Mammary epithelial cell (primary cell): ENCODE measurements at regions of chr11 and their contacts with region 1.

Region 1: GRCh38 chr11:105034813-105035620 is at the start of gene CASP1:
- DNase-seq: peak; percentile 83
- H3K4me3 ChIP-seq: peak within 1 kb of the TSS; percentile 47 to 61 (median 59)
- H3K27ac ChIP-seq: peak within 1 kb of the TSS; percentile 47
- H3K4me1 ChIP-seq: peaks cover 12% of the 10 kb centered on the region
- H3K27me3 ChIP-seq: no peaks in the 10 kb centered on the region
- CTCF ChIP-seq: no peak
- total RNA-seq, gene CASP1: 44.3 to 56.1 TPM

Region 2: DNA sequence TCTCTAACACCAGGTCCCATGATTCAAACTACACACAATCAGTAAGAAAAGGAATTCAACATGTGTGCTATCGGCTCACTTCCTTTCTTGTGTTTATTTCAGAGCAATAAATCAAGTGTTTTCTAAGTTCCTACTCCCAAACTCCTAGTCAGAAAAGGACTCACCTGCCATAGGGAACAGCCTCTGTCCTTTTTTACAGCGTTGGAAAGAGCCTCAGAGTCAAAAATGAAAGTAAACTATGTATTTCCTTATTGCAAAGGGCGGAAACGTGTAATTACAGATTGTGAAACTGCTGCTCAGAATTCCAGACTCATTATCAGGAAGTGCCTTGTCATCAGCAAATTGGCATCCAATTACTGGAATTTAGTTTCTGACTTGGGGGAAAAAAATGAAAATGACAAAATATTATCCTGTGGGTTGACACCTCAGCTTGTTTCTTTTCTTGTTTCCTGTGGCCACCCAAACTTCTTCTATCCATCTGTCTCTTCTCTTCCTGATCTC is 66.6 kb before region 1 on chr11 and contains the start of gene CASP4:
- CTCF ChIA-PET with region 1: no interaction called
- dilution Hi-C with region 1: no loop called
- in situ Hi-C with region 1: no loop called
- intact Hi-C with region 1: loop called (anchors 5 kb)
- DNase-seq: peak; percentile 71
- H3K4me3 ChIP-seq: peak within 1 kb of the TSS; percentile 49 to 76 (median 72)
- H3K27ac ChIP-seq: peak within 1 kb of the TSS; percentile 86
- H3K4me1 ChIP-seq: peaks cover 26% of the 10 kb centered on the region
- H3K27me3 ChIP-seq: no peaks in the 10 kb centered on the region
- CTCF ChIP-seq: no peak
- total RNA-seq, gene CASP4: 76.6 to 190 TPM

Region 3: GRCh38 chr11:105051264-105051958 is 16.4 kb after region 1 on chr11:
- CTCF ChIA-PET with region 1: interaction called, 17 read pairs
- dilution Hi-C with region 1: no loop called
- in situ Hi-C with region 1: no loop called
- intact Hi-C with region 1: no loop called
- DNase-seq: no peak
- H3K4me3 ChIP-seq: no peak overlapping the region
- H3K27ac ChIP-seq: no peak overlapping the region
- H3K4me1 ChIP-seq: peaks cover 7% of the 10 kb centered on the region
- H3K27me3 ChIP-seq: no peaks in the 10 kb centered on the region
- CTCF ChIP-seq: no peak

Region 4: GRCh38 chr11:105109855-105110687 is 75.1 kb after region 1 on chr11:
- CTCF ChIA-PET with region 1: no interaction called
- dilution Hi-C with region 1: loop called (anchors 5 kb)
- in situ Hi-C with region 1: no loop called
- intact Hi-C with region 1: no loop called
- DNase-seq: no peak
- H3K4me3 ChIP-seq: peak overlapping the region in 1 of 3 experiments; percentile 20
- H3K27ac ChIP-seq: peak overlapping the region; percentile 40
- H3K4me1 ChIP-seq: peaks cover 6% of the 10 kb centered on the region
- H3K27me3 ChIP-seq: no peaks in the 10 kb centered on the region
- CTCF ChIP-seq: no peak

Region 5: DNA sequence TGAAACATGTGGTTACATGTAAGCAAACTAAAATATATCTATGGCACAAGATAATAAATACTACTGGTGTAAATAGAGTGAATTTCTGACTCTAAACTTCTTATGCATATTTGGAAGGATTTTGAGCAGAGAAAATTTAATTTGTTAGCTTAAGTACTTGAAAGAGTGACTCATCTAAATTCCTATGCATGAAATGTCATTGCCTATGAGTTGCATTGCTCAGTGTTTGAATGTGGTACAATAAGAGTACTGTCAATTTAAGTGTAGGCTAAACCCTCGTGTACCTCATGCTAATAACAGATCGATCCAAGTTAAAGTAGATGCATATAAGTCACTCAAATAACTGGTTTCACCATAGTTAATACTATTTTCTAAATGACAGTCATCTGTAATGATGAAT is 109.9 kb after region 1 on chr11:
- CTCF ChIA-PET with region 1: no interaction called
- dilution Hi-C with region 1: no loop called
- in situ Hi-C with region 1: loop called in 1 of 2 experiments (anchors 25 kb)
- intact Hi-C with region 1: no loop called
- DNase-seq: peak; percentile 37
- H3K4me3 ChIP-seq: no peak overlapping the region
- H3K27ac ChIP-seq: no peak overlapping the region
- H3K4me1 ChIP-seq: no peaks in the 10 kb centered on the region
- H3K27me3 ChIP-seq: no peaks in the 10 kb centered on the region
- CTCF ChIP-seq: no peak

Region 6: DNA sequence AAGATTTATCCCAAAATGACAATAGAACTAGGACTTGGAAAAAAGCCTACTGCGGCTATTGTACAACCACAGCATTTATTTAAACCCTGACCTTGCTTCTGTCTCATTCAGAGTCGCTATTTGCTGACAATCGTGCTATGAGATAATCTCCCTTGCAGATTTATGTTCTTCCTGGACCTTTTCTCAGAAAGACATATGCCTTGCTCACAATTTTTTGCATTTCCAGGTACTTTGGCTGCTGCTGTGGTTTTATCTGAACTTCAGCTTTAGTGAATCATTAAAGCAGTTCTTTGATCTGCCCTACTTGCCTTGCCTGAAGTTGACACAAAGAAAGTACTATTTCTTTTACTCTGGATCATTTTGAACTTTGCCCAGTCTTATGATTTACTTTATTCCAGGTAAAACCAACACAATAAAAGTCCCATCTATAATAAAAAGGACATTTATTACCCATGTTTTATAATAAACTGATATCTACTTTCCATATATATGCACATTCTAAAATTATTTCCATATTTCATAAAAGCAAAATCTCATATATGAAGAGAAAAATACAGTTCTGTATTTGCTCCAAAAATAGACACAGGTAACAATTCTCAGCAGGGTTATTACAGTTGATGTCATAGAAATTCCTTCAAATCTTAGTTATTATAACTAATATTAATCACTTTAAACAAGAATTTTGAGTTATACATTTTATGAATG is 168.0 kb after region 1 on chr11:
- CTCF ChIA-PET with region 1: no interaction called
- dilution Hi-C with region 1: no loop called
- in situ Hi-C with region 1: no loop called
- intact Hi-C with region 1: no loop called
- DNase-seq: no peak
- H3K4me3 ChIP-seq: no peak overlapping the region
- H3K27ac ChIP-seq: no peak overlapping the region
- H3K4me1 ChIP-seq: no peaks in the 10 kb centered on the region
- H3K27me3 ChIP-seq: no peaks in the 10 kb centered on the region
- CTCF ChIP-seq: no peak